Activated CD4-positive, alpha-beta T cell treated with anti-CD3 and anti-CD28 coated beads for 36 hours (primary cell): ENCODE measurements at regions of chr5 and their contacts with region 1.

Region 1: GRCh38 chr5:39570403-39571027 is 145.7 kb upstream of the DAB2 start:
- DNase-seq: no peak
- ATAC-seq: no peak
- H3K4me3 Mint-ChIP-seq: no peak overlapping the region
- H3K27ac Mint-ChIP-seq: no peak overlapping the region
- H3K4me1 Mint-ChIP-seq: no peaks in the 10 kb centered on the region
- H3K27me3 Mint-ChIP-seq: peaks cover 4% of the 10 kb centered on the region

Region 2: GRCh38 chr5:39005566-39006232 is 564.8 kb before region 1 on chr5:
- CTCF ChIA-PET with region 1: no interaction called
- POLR2A ChIA-PET with region 1: no interaction called
- intact Hi-C with region 1: loop called in 1 of 2 experiments (anchors 10 kb)
- DNase-seq: peak; percentile 13
- ATAC-seq: peak; percentile 60
- H3K4me3 Mint-ChIP-seq: no peak overlapping the region
- H3K27ac Mint-ChIP-seq: no peak overlapping the region
- H3K4me1 Mint-ChIP-seq: peaks cover 51% of the 10 kb centered on the region
- H3K27me3 Mint-ChIP-seq: no peaks in the 10 kb centered on the region

Region 3: GRCh38 chr5:39424736-39425637 is 145.5 kb before region 1 on chr5 and contains the start of gene DAB2:
- CTCF ChIA-PET with region 1: interaction called, 13 read pairs
- POLR2A ChIA-PET with region 1: no interaction called
- intact Hi-C with region 1: no loop called
- DNase-seq: peak; percentile 70
- ATAC-seq: peak; percentile 88
- H3K4me3 Mint-ChIP-seq: peak within 1 kb of the TSS; percentile 68
- H3K27ac Mint-ChIP-seq: no peak within 1 kb of the TSS
- H3K4me1 Mint-ChIP-seq: no peaks in the 10 kb centered on the region
- H3K27me3 Mint-ChIP-seq: peaks cover 42% of the 10 kb centered on the region
- total RNA-seq, gene DAB2: 0.05 to 0.26 TPM